Mammary epithelial cell (primary cell): ENCODE measurements at regions of chr17 and their contacts with region 1.

Region 1: GRCh38 chr17:11170881-11171280 is 70.1 kb upstream of the SHISA6 start:
- DNase-seq: no peak
- H3K4me3 ChIP-seq: no peak overlapping the region
- H3K27ac ChIP-seq: no peak overlapping the region
- H3K4me1 ChIP-seq: no peaks in the 10 kb centered on the region
- H3K27me3 ChIP-seq: no peaks in the 10 kb centered on the region
- CTCF ChIP-seq: no peak

Region 2: GRCh38 chr17:11053846-11054245 is 117.0 kb before region 1 on chr17:
- CTCF ChIA-PET with region 1: no interaction called
- dilution Hi-C with region 1: loop called (anchors 25 kb)
- in situ Hi-C with region 1: no loop called
- intact Hi-C with region 1: no loop called
- DNase-seq: no peak
- H3K4me3 ChIP-seq: no peak overlapping the region
- H3K27ac ChIP-seq: no peak overlapping the region
- H3K4me1 ChIP-seq: no peaks in the 10 kb centered on the region
- H3K27me3 ChIP-seq: no peaks in the 10 kb centered on the region
- CTCF ChIP-seq: no peak

Region 3: GRCh38 chr17:11212792-11213191 is 41.9 kb after region 1 on chr17:
- CTCF ChIA-PET with region 1: no interaction called
- dilution Hi-C with region 1: loop called (anchors 10 kb)
- in situ Hi-C with region 1: no loop called
- intact Hi-C with region 1: no loop called
- DNase-seq: no peak
- H3K4me3 ChIP-seq: no peak overlapping the region
- H3K27ac ChIP-seq: no peak overlapping the region
- H3K4me1 ChIP-seq: no peaks in the 10 kb centered on the region
- H3K27me3 ChIP-seq: no peaks in the 10 kb centered on the region
- CTCF ChIP-seq: no peak